ENCODE measurements at regions of chr1 and their contacts with region 1.

Region 1: GRCh38 chr1:220690140-220691025 is at the start of gene C1orf115:
- DNase-seq: peak; percentile 73
- ATAC-seq: peak; percentile 99
- H3K4me3 Mint-ChIP-seq: peak within 1 kb of the TSS; percentile 65
- H3K27ac Mint-ChIP-seq: no peak within 1 kb of the TSS
- H3K4me1 Mint-ChIP-seq: peaks cover 4% of the 10 kb centered on the region
- H3K27me3 Mint-ChIP-seq: peaks cover 18% of the 10 kb centered on the region
- CTCF ChIP-seq: peak; percentile 91
- total RNA-seq, gene C1orf115: 0.07 to 0.13 TPM

Region 2: DNA sequence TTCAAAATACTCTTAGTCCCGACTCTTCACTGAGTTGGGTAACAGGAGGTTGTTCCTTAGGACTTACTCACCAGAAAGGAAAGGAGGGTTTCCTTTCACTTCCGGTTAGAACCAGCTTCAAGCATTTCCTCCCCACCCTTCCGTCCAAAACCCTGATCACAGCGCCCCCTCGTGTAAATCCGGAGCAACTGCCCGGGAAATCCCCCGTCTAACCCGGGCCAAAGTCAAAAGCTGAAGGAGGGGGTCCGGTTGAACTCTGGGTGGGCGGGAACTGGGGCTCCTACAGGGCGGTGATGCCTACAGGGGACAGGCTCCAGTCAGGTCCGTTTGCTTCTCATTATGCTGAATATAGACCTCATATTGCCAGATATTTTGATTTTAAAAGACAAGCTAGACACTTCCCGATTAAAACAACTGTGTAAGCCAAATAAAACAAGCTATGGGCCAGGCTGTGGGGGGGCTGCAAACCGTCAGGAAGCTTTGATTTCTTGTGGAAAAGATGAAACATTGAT is 42.8 kb after region 1 on chr1:
- CTCF ChIA-PET with region 1: interaction called, 12 read pairs
- POLR2A ChIA-PET with region 1: no interaction called
- intact Hi-C with region 1: loop called (anchors 5 kb)
- DNase-seq: peak; percentile 78
- ATAC-seq: peak; percentile 98
- H3K4me3 Mint-ChIP-seq: no peak overlapping the region
- H3K27ac Mint-ChIP-seq: no peak overlapping the region
- H3K4me1 Mint-ChIP-seq: peaks cover 3% of the 10 kb centered on the region
- H3K27me3 Mint-ChIP-seq: no peaks in the 10 kb centered on the region
- CTCF ChIP-seq: peak; percentile 64

Region 3: GRCh38 chr1:220776720-220777326 is 86.4 kb after region 1 on chr1:
- CTCF ChIA-PET with region 1: interaction called, 3 read pairs
- POLR2A ChIA-PET with region 1: no interaction called
- intact Hi-C with region 1: loop called (anchors 5 kb)
- DNase-seq: peak; percentile 73
- ATAC-seq: peak; percentile 72
- H3K4me3 Mint-ChIP-seq: no peak overlapping the region
- H3K27ac Mint-ChIP-seq: no peak overlapping the region
- H3K4me1 Mint-ChIP-seq: no peaks in the 10 kb centered on the region
- H3K27me3 Mint-ChIP-seq: peaks cover 10% of the 10 kb centered on the region
- CTCF ChIP-seq: peak; percentile 87

Measured in activated CD8-positive, alpha-beta T cell treated with anti-CD3 and anti-CD28 coated beads for 36 hours (primary cell).